ENCODE measurements at regions of chr1 and their contacts with region 1.

Region 1: DNA sequence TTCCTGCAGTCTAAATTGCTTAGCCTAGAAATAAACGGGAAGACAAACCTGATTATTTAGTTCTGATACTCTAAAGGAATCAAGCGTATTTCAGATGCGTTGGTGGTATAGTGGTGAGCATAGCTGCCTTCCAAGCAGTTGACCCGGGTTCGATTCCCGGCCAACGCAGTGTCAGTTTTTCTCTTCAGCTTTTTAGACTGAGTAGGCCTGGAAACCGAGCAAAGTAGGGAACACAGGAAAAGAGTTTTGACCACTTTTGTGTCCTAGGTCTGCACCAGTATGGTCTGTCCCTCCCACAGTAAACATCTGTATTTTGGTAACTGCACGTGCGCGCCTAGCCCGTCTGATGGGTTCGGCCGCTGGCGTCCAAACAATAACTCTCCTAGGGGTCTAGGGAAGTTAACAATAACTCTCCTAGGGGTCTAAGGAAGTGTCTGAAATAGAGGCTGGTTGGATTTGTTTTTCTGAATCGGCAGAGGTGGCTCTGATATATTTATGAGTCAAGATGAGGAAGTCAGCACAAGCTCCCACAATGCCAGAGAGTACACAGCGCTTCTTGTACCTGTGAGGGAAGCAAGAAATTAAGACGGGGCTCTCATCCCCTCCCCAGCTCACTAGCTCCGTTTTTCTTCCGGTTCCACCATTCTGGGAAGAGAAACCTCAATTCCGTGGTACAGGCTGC is 15.6 kb upstream of the HJV start:
- DNase-seq: peak; percentile 90
- ATAC-seq: peak; percentile 55
- H3K4me3 ChIP-seq: peak overlapping the region; percentile 84 to 96 (median 93)
- H3K4me3 Mint-ChIP-seq: peak overlapping the region; percentile 99
- H3K27ac ChIP-seq: peak overlapping the region; percentile 74 to 83
- H3K27ac Mint-ChIP-seq: peak overlapping the region; percentile 98
- H3K4me1 ChIP-seq: peaks cover 27 to 30% of the 10 kb centered on the region in 2 donors
- H3K4me1 Mint-ChIP-seq: peaks cover 37% of the 10 kb centered on the region
- H3K27me3 ChIP-seq: no peaks in the 10 kb centered on the region
- H3K27me3 Mint-ChIP-seq: no peaks in the 10 kb centered on the region
- CTCF ChIP-seq: no peak

Region 2: GRCh38 chr1:145690624-145691035 is 346.5 kb before region 1 on chr1:
- CTCF ChIA-PET with region 1: no interaction called
- POLR2A ChIA-PET with region 1: no interaction called
- intact Hi-C with region 1: no loop called
- DNase-seq: no peak
- ATAC-seq: no peak
- H3K4me3 ChIP-seq: no peak overlapping the region
- H3K4me3 Mint-ChIP-seq: no peak overlapping the region
- H3K27ac ChIP-seq: no peak overlapping the region
- H3K27ac Mint-ChIP-seq: no peak overlapping the region
- H3K4me1 ChIP-seq: peaks cover 7 to 13% of the 10 kb centered on the region in 2 donors
- H3K4me1 Mint-ChIP-seq: peaks cover 11% of the 10 kb centered on the region
- H3K27me3 ChIP-seq: no peaks in the 10 kb centered on the region
- H3K27me3 Mint-ChIP-seq: peaks cover 3% of the 10 kb centered on the region
- CTCF ChIP-seq: no peak

Region 3: GRCh38 chr1:145823565-145824498 is 213.3 kb before region 1 on chr1 and contains the starts of genes POLR3C and RNF115:
- CTCF ChIA-PET with region 1: no interaction called
- POLR2A ChIA-PET with region 1: no interaction called
- intact Hi-C with region 1: no loop called
- DNase-seq: peak; percentile 91
- ATAC-seq: peak; percentile 95
- H3K4me3 ChIP-seq: peak within 1 kb of the TSS; percentile 66 to 97 (median 82)
- H3K4me3 Mint-ChIP-seq: peak within 1 kb of the TSS; percentile 98
- H3K27ac ChIP-seq: peak within 1 kb of the TSS; percentile 61 to 89
- H3K27ac Mint-ChIP-seq: peak within 1 kb of the TSS; percentile 97
- H3K4me1 ChIP-seq: peaks cover 12 to 13% of the 10 kb centered on the region in 2 donors
- H3K4me1 Mint-ChIP-seq: peaks cover 28% of the 10 kb centered on the region
- H3K27me3 ChIP-seq: no peaks in the 10 kb centered on the region
- H3K27me3 Mint-ChIP-seq: no peaks in the 10 kb centered on the region
- CTCF ChIP-seq: no peak
- total RNA-seq, gene POLR3C: 48.0 and 49.3 TPM in 2 replicates
- total RNA-seq, gene RNF115: 19.8 and 21.7 TPM in 2 replicates

Region 4: GRCh38 chr1:145927063-145927886 is 109.8 kb before region 1 on chr1 and contains the start of gene RBM8A:
- CTCF ChIA-PET with region 1: interaction called, 5 read pairs
- POLR2A ChIA-PET with region 1: interaction called, 8 read pairs
- intact Hi-C with region 1: loop called (anchors 2 kb)
- DNase-seq: peak; percentile 98
- ATAC-seq: peak; percentile 98
- H3K4me3 ChIP-seq: peak within 1 kb of the TSS; percentile 71 to 95 (median 83)
- H3K4me3 Mint-ChIP-seq: peak within 1 kb of the TSS; percentile 78
- H3K27ac ChIP-seq: peak within 1 kb of the TSS; percentile 96 to 99
- H3K27ac Mint-ChIP-seq: peak within 1 kb of the TSS; percentile 81
- H3K4me1 ChIP-seq: peaks cover 18 to 30% of the 10 kb centered on the region in 2 donors
- H3K4me1 Mint-ChIP-seq: peaks cover 11% of the 10 kb centered on the region
- H3K27me3 ChIP-seq: no peaks in the 10 kb centered on the region
- H3K27me3 Mint-ChIP-seq: no peaks in the 10 kb centered on the region
- CTCF ChIP-seq: peak; percentile 81
- total RNA-seq, gene RBM8A: 134 and 137 TPM in 2 replicates

Region 5: DNA sequence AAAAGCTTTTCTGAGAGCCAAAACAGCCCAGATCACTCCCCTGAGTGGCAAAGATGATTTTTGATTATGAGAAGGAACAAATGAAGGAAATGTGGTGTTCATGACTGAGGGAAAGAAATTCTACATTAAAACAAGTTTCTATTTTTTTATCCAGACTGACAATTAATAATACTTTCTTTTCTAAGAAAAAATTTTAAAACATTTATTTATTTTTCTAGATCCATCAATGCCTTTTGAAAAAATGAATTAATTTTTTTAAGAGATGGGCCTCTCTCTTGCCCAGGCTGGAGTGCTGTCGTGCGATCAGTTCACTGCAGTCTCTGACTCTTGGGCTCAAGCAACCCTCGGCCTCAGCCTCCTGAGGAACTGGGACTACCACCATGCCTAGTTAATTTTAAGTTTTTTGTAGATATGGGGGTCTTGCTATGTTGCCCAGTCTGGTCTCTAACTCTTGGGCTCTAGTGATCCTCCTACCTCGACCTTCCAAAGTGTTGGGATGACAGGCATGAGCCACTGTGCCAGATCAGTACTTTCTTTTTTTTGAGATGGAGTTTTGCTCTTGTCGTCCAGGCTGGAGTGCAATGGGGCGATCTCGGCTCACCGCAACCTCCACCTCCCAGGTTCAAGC is 29.5 kb before region 1 on chr1:
- CTCF ChIA-PET with region 1: interaction called, 10 read pairs
- POLR2A ChIA-PET with region 1: interaction called, 3 read pairs
- intact Hi-C with region 1: no loop called
- DNase-seq: no peak
- ATAC-seq: no peak
- H3K4me3 ChIP-seq: no peak overlapping the region
- H3K4me3 Mint-ChIP-seq: no peak overlapping the region
- H3K27ac ChIP-seq: peak overlapping the region in 1 of 2 donors; percentile 83
- H3K27ac Mint-ChIP-seq: peak overlapping the region; percentile 95
- H3K4me1 ChIP-seq: peaks cover 13 to 24% of the 10 kb centered on the region in 2 donors
- H3K4me1 Mint-ChIP-seq: peaks cover 22% of the 10 kb centered on the region
- H3K27me3 ChIP-seq: no peaks in the 10 kb centered on the region
- H3K27me3 Mint-ChIP-seq: no peaks in the 10 kb centered on the region
- CTCF ChIP-seq: peak; percentile 18

Region 6: GRCh38 chr1:146012737-146013403 is 24.2 kb before region 1 on chr1:
- CTCF ChIA-PET with region 1: interaction called, 10 read pairs
- POLR2A ChIA-PET with region 1: interaction called, 3 read pairs
- intact Hi-C with region 1: loop called (anchors 1 kb)
- DNase-seq: peak; percentile 82
- ATAC-seq: peak; percentile 51
- H3K4me3 ChIP-seq: no peak overlapping the region
- H3K4me3 Mint-ChIP-seq: no peak overlapping the region
- H3K27ac ChIP-seq: no peak overlapping the region
- H3K27ac Mint-ChIP-seq: no peak overlapping the region
- H3K4me1 ChIP-seq: peaks cover 0 to under 1% of the 10 kb centered on the region in 2 donors
- H3K4me1 Mint-ChIP-seq: peaks cover 2% of the 10 kb centered on the region
- H3K27me3 ChIP-seq: peaks cover 0 to 4% (median 0%) of the 10 kb centered on the region in 4 experiments
- H3K27me3 Mint-ChIP-seq: peaks cover 14% of the 10 kb centered on the region
- CTCF ChIP-seq: peak; percentile 95

Region 7: DNA sequence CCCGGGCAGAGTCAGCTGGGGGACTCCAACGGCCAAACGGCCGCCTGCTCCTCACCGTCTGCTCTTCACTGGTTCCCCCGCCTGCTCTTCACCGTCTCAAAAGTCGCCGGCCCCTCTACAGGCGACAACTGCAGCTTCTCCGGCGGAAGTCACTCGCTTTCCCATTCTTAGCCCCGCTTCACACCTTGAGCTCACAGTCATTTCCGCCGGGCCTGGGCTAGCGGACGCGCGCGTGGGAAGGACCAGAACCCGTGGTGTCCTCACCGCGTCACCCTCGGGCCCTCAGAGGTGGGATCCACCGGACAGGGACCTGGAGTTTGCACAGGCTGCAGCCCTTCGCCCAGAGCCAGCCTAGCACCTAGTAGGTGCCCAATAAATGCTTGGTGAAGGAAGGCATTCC is 12.3 kb after region 1 on chr1:
- CTCF ChIA-PET with region 1: interaction called, 30 read pairs
- POLR2A ChIA-PET with region 1: interaction called, 24 read pairs
- intact Hi-C with region 1: no loop called
- DNase-seq: no peak
- ATAC-seq: no peak
- H3K4me3 ChIP-seq: no peak overlapping the region
- H3K4me3 Mint-ChIP-seq: no peak overlapping the region
- H3K27ac ChIP-seq: no peak overlapping the region
- H3K27ac Mint-ChIP-seq: peak overlapping the region; percentile 3
- H3K4me1 ChIP-seq: peaks cover 3 to 5% of the 10 kb centered on the region in 2 donors
- H3K4me1 Mint-ChIP-seq: peaks cover 20% of the 10 kb centered on the region
- H3K27me3 ChIP-seq: no peaks in the 10 kb centered on the region
- H3K27me3 Mint-ChIP-seq: no peaks in the 10 kb centered on the region
- CTCF ChIP-seq: no peak

Region 8: DNA sequence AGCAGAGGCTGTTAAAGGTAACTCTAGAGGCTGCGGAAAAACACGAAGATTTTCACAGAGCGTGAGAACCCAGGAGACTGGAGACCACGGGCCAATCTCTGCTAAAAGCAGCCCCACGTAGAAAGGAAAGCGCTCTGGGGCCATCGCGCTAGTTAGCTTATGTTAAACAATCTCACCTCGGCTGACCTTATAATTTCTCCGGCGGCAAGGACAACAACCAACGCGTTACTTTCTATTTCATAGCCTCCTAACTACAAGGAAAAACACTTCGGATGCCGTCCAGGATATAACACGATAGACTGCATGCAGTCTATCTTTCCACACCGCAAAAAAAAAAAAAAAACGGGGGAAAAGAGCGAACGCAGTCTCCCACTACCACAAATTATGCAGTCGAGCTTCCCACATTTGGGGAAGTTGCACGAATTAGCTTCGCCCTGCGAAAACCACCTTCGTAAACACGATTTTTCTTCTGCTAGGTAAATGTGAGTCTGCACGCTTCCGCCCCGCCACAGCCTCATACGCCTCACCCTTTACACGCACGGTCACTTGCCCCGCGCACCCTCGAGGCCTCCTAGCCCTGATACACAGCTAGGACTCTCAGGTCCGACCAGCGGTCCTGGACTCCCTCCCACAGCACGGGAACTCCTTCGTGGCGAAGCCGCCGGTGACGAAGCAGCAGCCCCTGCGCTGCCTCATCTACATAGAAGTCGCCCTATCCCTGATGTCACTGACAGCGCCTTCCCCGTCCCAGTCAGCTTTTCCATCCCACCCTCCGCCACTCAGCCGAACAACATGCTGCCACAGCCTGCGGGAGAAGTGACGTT is 1047.4 kb after region 1 on chr1:
- CTCF ChIA-PET with region 1: no interaction called
- POLR2A ChIA-PET with region 1: no interaction called
- intact Hi-C with region 1: no loop called
- DNase-seq: peak; percentile 92
- ATAC-seq: peak; percentile 76
- H3K4me3 ChIP-seq: peak overlapping the region; percentile 56 to 79 (median 71)
- H3K4me3 Mint-ChIP-seq: peak overlapping the region; percentile 99
- H3K27ac ChIP-seq: peak overlapping the region; percentile 93 to 96
- H3K27ac Mint-ChIP-seq: peak overlapping the region; percentile 100
- H3K4me1 ChIP-seq: peaks cover 33 to 36% of the 10 kb centered on the region in 2 donors
- H3K4me1 Mint-ChIP-seq: peaks cover 33% of the 10 kb centered on the region
- H3K27me3 ChIP-seq: peaks cover 0 to 29% (median 23%) of the 10 kb centered on the region in 4 experiments
- H3K27me3 Mint-ChIP-seq: peaks cover 51% of the 10 kb centered on the region
- CTCF ChIP-seq: no peak

Measured in B cell (primary cell).